Activated CD8-positive, alpha-beta T cell treated with anti-CD3 and anti-CD28 coated beads for 36 hours (primary cell): ENCODE measurements at regions of chr4 and their contacts with region 1.

Region 1: DNA sequence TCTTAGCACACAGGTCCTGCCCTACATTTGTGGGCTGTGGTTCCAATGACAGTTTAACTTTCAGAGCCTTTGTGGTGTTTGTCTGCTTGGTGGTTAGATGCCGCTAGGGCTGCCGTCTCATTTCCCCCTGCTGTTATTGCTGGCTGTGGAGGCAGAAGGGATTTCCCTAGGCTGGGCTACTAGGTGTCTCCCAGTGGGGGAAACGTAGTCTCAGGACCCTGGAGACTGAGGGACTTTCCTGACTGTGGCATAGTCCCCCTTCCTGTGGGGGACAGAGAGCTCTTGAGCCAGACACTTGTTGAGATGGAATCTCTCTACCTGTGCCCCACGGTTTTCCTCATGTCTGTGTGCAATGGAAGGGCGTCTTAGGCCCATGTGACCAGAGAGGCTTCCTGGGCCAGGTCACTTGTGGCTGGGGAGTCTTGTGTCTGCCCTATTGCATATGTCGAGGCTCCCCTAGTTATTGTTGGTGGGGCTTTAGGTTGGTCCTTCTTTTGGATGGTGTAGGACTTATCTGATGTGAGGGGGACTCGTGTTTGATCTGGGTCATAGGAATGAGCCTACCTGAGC is 68.2 kb downstream of the ARHGAP10 start:
- DNase-seq: peak; percentile 86
- ATAC-seq: peak; percentile 97
- H3K4me3 Mint-ChIP-seq: peak overlapping the region; percentile 6
- H3K27ac Mint-ChIP-seq: peak overlapping the region; percentile 76
- H3K4me1 Mint-ChIP-seq: peaks cover 33% of the 10 kb centered on the region
- H3K27me3 Mint-ChIP-seq: peaks cover 1% of the 10 kb centered on the region
- CTCF ChIP-seq: no peak

Region 2: DNA sequence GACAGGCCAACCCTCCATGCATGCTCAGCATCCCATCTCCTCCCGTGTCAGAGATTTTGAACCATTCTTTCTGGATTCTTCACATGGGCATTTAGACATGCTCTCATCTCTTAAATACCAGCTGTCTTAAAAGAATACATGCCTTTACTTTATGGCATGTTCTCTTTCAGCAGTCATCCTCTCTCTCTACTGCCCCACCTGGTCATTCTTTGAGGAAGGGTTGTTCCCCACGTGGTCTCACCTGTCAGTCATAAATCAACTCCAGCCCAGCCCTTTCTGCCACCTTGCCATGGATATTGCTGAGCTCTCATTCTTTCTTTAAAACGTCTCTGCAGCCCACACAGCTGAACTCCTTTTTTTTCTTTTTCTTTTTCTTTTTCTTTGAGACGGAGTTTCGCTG is 43.1 kb after region 1 on chr4:
- CTCF ChIA-PET with region 1: no interaction called
- POLR2A ChIA-PET with region 1: no interaction called
- intact Hi-C with region 1: loop called (anchors 5 kb)
- DNase-seq: peak; percentile 43
- ATAC-seq: peak; percentile 69
- H3K4me3 Mint-ChIP-seq: no peak overlapping the region
- H3K27ac Mint-ChIP-seq: no peak overlapping the region
- H3K4me1 Mint-ChIP-seq: peaks cover 4% of the 10 kb centered on the region
- H3K27me3 Mint-ChIP-seq: no peaks in the 10 kb centered on the region
- CTCF ChIP-seq: peak; percentile 31

Region 3: GRCh38 chr4:148166132-148166591 is 366.1 kb after region 1 on chr4:
- CTCF ChIA-PET with region 1: no interaction called
- POLR2A ChIA-PET with region 1: no interaction called
- intact Hi-C with region 1: no loop called
- DNase-seq: no peak
- ATAC-seq: no peak
- H3K4me3 Mint-ChIP-seq: no peak overlapping the region
- H3K27ac Mint-ChIP-seq: no peak overlapping the region
- H3K4me1 Mint-ChIP-seq: peaks cover 14% of the 10 kb centered on the region
- H3K27me3 Mint-ChIP-seq: no peaks in the 10 kb centered on the region
- CTCF ChIP-seq: no peak